ENCODE measurements at regions of chr7 and their contacts with region 1.

Region 1: GRCh38 chr7:38820571-38820970 is 88.4 kb downstream of the VPS41 start:
- DNase-seq: no peak
- H3K4me3 ChIP-seq: no peak overlapping the region
- H3K27ac ChIP-seq: no peak overlapping the region
- H3K4me1 ChIP-seq: no peaks in the 10 kb centered on the region
- H3K27me3 ChIP-seq: no peaks in the 10 kb centered on the region
- CTCF ChIP-seq: no peak

Region 2: DNA sequence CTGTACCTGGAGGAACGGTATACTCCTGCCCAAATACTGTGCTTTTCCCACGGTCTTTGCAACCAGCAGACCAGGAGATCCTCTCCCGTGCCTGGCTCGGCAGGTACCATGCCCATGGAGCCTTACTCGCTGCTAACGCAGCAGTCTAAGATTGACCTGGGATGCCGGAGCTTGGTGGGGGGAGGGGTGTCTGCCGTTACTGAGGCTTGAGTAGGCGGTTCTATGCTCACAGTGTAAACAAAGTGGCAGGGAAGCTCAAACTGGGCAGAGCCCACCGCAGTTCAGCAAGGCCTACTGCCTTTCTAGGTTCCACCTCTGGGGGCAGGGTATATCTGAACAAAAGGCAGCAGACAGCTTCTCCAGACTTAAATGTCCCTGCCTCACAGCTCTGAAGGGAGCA is 65.7 kb after region 1 on chr7:
- CTCF ChIA-PET with region 1: no interaction called
- POLR2A ChIA-PET with region 1: interaction called, 11 read pairs
- intact Hi-C with region 1: no loop called
- DNase-seq: no peak
- H3K4me3 ChIP-seq: no peak overlapping the region
- H3K27ac ChIP-seq: no peak overlapping the region
- H3K4me1 ChIP-seq: no peaks in the 10 kb centered on the region
- H3K27me3 ChIP-seq: no peaks in the 10 kb centered on the region
- CTCF ChIP-seq: no peak

Region 3: DNA sequence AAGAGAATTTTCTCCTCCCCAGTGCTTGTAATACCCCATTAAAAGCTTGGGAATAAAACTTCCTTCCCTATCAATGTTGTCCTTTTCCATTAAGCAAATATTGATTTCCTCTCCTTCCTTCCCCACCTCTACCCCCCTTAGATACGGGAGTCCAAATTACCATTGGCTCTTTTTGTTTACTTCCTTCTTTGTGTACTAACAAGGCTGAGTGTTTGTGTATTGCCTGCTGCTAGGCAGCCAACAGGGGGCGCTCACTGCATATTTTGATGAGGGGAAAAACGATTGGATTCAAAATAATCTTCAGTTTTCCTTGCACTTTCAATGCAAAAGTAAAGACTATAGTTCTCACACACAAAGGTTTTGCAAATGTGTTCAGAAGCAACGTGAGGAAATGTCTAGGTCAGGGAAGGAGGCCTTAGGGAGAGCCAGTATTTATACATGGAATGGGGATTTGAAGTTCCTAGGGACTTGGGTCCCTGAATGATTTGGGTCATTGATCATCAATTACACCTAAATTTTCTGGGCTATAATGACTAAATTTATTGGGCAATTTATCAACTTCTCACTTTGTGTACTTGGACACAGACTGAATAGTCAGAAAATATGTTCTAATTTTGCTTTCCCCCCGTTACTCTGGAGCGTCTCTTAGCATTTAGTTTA is 112.1 kb after region 1 on chr7:
- CTCF ChIA-PET with region 1: no interaction called
- POLR2A ChIA-PET with region 1: no interaction called
- intact Hi-C with region 1: no loop called
- DNase-seq: peak; percentile 52 to 58
- H3K4me3 ChIP-seq: no peak overlapping the region
- H3K27ac ChIP-seq: no peak overlapping the region
- H3K4me1 ChIP-seq: peaks cover 14% of the 10 kb centered on the region
- H3K27me3 ChIP-seq: peaks cover 5% of the 10 kb centered on the region; the same call in 1 of the 2 replicates
- CTCF ChIP-seq: peak; percentile 98

Measured in PC-9 (cell line).